ENCODE measurements at regions of chr11 and their contacts with region 1.

Region 1: DNA sequence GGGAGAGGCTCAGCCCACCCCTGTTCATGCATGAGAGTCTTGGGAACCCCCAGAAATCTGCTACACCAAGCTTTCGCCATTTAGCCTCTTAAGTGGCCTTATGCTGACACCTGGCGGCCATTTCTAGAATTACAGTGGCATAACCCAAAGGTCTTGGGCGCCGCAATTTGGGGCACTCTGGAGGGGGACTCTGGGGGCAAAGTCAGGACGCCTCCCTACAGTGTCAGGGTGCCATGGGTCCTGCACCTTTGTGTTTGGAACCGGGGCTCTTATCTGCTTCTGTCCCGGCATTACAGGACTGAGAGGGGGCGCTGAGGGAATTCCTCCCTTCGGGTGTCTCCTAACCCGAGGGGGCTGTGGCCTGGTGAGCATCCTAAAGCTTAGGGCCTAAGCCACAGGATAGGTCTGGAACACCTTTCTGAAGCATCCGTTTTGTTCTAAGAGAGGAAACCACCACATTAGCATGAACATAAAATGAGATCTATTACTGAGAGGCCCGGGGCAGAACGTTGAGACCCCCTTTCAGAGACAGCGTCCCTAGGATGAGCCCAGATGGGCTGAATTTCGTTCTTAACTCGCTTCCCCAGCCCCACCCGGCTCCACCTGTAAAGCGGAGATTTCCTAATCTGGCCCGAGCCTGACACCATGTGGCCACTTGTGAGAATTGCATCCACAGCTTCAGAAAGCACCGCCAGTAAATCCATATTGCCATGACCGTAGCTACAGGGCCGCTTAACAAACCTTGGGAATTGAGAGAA is 9.3 kb downstream of the INS start:
- DNase-seq: peak; percentile 74 to 89 (median 83)
- H3K4me3 ChIP-seq: no peak overlapping the region
- H3K27ac ChIP-seq: no peak overlapping the region
- H3K4me1 ChIP-seq: peaks cover 0 to 7% (median 2%) of the 10 kb centered on the region in 4 experiments
- H3K27me3 ChIP-seq: peaks cover 0 to 48% (median 23%) of the 10 kb centered on the region in 5 experiments

Region 2: DNA sequence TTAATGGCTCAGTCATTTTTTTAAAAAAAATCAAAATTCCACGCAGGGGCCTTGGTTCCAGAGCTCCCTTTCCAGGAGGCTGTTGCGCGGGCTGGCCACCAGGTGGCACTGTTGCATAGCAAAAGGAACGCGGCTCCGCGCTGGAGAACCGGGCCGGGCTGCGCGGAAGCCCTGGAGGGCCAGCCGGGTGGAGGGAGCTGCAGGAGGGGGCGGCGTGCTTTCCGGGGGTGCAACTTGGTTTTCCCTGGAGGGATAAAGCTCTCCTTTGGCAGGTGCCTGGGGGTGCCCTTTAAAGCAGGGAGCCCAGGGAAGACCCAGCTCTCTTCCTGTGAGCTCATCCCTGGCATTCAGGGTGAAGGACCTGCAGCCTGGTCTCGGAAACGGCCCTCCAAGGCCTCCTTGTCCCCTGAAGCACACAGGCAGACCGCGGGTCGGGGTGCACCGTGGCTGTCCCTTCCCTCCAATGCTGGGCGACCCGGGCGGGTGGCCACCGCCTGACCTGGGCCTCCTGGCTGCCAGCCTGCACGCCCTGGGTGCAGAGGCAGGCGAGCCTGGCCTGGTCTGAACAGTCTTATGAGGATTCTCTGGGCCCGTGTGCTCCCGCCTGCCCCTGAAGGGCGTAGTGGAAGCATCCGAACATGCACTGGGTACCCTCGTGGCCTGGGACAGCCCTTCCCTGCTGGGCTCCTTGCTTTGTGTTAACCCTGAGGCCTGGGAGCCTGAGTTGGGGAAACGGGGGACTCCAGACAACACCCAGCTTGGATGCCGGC is 498.7 kb before region 1 on chr11:
- CTCF ChIA-PET with region 1: interaction called, 11 read pairs
- POLR2A ChIA-PET with region 1: no interaction called
- DNase-seq: peak; percentile 56 to 77 (median 73)
- H3K4me3 ChIP-seq: peak overlapping the region in 1 of 7 experiments; percentile 48
- H3K27ac ChIP-seq: no peak overlapping the region
- H3K4me1 ChIP-seq: peaks cover 2 to 49% (median 41%) of the 10 kb centered on the region in 4 experiments
- H3K27me3 ChIP-seq: peaks cover 0 to 3% (median 0%) of the 10 kb centered on the region in 5 experiments

Region 3: DNA sequence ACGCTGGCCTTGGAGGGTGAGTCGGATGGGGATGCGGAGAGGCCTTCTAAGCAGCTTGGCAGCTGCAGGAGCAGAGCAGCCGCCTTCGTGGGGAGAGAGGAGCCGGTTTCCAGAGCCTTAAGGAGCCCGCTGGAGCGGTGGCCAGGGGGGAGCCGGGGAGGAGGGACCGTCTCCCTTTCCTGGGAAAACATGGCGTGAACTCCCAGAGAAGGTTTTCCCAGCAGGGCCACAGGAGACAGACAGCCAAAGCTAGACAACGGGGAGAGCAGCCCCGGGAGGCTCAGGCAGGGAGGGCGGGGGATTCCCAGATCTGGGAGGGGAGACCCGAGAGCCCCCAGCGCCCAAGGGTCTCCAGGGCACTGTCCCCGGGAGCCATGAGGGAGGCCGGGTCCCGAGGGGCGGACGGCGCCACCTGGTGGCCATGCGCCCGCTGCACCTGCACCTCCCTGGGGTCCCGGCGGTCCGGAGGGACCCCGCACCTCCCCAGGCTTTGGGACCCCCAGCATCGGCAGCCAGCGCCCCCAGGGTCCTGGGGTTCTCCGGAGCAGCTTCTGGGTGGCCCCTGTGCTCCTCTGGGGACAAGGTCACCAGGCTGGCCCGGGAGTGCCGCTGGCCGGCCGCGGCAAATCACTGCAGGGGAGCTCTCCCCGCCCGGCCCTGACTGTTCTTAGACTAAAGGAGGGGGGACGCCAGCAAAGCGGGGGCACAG is 319.3 kb before region 1 on chr11:
- CTCF ChIA-PET with region 1: interaction called, 52 read pairs
- POLR2A ChIA-PET with region 1: no interaction called
- DNase-seq: peak in 2 of 3 donors; percentile 48 to 53
- H3K4me3 ChIP-seq: no peak overlapping the region
- H3K27ac ChIP-seq: no peak overlapping the region
- H3K4me1 ChIP-seq: peaks cover 0 to 16% (median 7%) of the 10 kb centered on the region in 4 experiments
- H3K27me3 ChIP-seq: peaks cover 0 to 13% (median 2%) of the 10 kb centered on the region in 5 experiments

Region 4: DNA sequence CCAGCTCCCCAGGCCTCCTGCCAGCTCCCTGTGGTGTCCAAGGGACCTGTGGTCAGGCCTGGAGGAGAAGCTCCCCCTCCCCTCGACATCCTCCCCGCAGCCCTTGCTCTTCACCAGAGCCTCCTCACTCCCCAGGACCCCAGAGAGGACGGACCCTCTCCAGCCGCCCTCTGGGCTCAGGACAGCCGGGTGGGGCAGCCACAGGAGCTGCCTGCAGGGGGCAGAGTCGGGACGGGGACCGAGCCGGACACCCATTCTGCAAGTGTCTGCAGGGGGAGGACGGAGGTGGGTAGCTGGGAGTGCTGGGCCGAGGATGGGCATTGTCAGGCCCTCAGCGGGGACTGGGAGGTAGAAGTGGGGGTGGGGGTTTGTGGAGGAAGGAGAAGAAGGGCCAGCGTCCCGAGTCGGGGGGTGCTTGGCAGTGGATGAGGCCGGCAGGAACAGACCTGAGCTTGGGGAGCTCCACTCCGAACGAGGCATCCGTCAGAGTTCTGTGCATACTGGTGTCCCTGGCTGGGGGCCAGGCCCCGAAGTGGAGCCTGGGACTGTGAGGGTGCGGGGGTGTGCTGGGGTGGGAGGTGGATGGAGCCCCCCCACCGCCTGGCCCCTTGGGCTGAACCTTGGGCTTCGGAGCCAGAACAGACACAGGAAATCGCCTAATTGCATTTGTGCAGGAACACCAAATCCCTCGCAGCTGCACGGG is 275.2 kb before region 1 on chr11:
- CTCF ChIA-PET with region 1: interaction called, 27 read pairs
- POLR2A ChIA-PET with region 1: no interaction called
- DNase-seq: peak in 2 of 3 donors; percentile 41 to 42
- H3K4me3 ChIP-seq: peak overlapping the region in 1 of 7 experiments; percentile 42
- H3K27ac ChIP-seq: no peak overlapping the region
- H3K4me1 ChIP-seq: peaks cover 0 to 55% (median 44%) of the 10 kb centered on the region in 4 experiments
- H3K27me3 ChIP-seq: no peaks in the 10 kb centered on the region

Region 5: DNA sequence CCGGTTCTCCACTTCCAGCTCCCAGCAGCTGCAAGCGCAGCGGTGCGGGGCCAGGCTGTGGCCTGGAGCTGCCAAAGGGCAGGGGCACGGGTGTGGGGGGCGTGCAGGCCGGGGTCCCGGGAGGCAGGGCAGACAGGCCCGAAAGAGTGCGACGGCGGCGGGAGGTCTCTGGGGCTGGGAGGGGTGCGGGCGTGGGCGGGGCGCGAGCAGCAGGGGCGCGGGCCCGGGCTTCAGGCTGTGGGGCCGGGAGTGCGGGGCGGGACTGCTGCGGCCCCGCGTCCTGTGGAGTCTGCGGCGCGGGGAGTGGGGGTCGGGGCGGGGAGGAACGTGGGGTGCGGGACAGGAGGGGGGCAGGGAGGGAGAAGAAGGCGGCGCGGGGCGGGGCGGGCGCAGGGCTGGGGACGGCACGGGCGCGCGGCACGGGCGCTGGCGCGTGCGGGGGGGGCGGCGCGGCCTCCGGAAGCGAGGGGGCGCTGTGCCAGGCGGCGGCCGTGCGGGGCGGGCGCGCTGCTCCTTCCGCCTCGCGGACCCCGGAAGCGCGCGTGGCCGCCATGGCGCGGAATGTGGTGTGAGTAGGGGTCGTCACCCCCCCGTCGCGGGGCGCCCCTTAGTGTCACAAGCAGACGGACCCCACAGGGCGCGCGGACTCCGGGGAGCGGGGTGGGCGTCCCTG is 204.7 kb before region 1 on chr11 and contains the start of gene MRPL23:
- CTCF ChIA-PET with region 1: interaction called, 38 read pairs
- POLR2A ChIA-PET with region 1: no interaction called
- DNase-seq: no peak
- H3K4me3 ChIP-seq: no peak within 1 kb of the TSS
- H3K27ac ChIP-seq: no peak within 1 kb of the TSS
- H3K4me1 ChIP-seq: peaks cover 0 to 13% (median 9%) of the 10 kb centered on the region in 4 experiments
- H3K27me3 ChIP-seq: no peaks in the 10 kb centered on the region

Region 6: DNA sequence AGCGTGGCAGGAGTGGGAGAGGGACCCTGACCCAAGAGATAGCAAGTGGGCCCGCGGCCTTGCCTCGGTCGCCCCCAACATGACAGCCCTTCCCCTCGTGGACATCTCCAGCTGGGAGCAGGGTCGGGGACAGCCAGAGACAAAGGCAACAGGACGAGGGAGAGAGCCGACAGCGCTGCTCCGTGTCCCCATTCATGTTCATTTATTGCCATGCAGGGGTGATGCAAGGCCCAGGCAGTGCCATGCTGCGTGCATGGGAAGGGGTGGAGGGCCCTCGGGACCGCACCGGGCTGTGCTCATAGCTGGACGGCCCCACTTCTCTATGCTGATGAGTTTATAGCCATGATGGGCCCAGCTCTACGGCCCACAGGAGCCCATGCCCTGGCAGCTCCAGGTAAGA is 191.9 kb before region 1 on chr11:
- CTCF ChIA-PET with region 1: interaction called, 44 read pairs
- POLR2A ChIA-PET with region 1: no interaction called
- DNase-seq: no peak
- H3K4me3 ChIP-seq: no peak overlapping the region
- H3K27ac ChIP-seq: no peak overlapping the region
- H3K4me1 ChIP-seq: no peaks in the 10 kb centered on the region
- H3K27me3 ChIP-seq: no peaks in the 10 kb centered on the region

Region 7: DNA sequence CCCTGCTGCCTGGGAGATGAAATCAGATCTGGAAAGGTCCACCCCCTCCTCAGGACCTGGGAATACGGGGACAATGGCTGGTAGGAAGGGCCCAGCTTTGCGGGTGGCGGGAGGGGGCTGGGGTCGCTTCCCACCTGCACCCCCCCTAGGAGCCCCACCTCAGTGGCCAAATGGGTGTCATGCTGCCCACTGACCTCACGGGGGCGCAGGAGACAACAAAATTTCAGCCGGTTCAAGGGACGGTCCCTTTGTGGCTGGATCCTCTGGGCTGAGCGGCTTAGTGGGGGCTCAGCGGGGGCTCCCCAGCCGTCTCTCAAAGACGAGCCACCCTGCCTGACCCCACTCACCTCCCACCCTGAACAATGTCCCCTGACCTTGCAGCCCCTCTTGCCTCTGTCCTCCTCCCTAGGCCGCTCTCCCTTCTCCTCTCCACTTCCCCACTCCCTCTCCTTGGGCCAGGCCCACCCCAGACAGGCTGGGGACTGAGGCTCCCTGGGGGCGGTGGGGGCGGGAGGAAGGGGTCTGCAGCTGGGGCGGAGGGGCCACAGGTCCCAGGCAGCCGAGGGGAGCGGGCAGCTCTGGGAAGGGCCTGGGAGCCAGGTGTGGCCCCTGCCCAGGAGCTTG is 114.7 kb before region 1 on chr11:
- CTCF ChIA-PET with region 1: interaction called, 341 read pairs
- POLR2A ChIA-PET with region 1: interaction called, 4 read pairs
- DNase-seq: no peak
- H3K4me3 ChIP-seq: no peak overlapping the region
- H3K27ac ChIP-seq: no peak overlapping the region
- H3K4me1 ChIP-seq: no peaks in the 10 kb centered on the region
- H3K27me3 ChIP-seq: peaks cover 0 to 2% (median 0%) of the 10 kb centered on the region in 5 experiments

Region 8: DNA sequence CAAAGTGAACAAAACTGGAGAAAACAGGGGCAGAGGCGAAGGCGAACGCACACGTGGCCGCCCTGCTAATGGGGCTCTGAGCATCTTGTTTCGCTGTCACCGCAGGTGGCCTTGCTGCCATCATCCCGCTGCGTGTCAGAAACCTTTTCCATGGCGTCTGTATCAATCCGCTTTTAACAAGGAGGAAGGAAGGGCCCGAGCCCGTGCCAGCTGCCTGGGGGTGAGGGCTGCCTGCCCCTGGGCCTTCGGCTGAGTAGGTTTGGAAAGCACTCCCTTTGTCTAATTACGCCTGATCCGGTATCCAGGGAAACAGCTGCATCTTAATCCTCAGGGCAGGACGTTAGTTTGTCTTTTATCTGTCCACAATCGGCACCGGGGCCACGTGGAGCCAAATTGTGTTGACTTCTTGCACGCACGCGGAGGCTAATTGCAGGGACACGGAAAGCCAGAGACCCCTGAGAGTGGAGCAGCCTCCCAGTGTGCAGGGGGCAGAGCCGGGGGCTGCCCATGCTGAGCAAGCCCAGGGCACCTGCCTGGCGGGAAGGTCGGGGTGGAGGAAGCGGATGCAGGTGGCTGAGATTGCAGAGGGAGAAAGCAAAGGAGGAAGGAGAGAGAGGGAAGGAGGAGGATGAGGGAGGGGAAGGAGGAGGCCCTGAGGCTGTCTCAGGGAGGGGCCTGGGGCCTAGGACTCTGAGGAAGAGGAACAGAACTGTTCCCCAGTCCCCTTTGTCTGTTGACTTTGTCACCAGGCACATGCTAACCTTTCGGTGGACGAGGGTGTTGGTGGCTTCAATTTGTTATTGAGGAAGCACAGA is 39.2 kb after region 1 on chr11:
- CTCF ChIA-PET with region 1: no interaction called
- POLR2A ChIA-PET with region 1: no interaction called
- DNase-seq: peak; percentile 54 to 88 (median 85)
- H3K4me3 ChIP-seq: peak overlapping the region in 1 of 7 experiments; percentile 30
- H3K27ac ChIP-seq: no peak overlapping the region
- H3K4me1 ChIP-seq: peaks cover 5 to 45% (median 25%) of the 10 kb centered on the region in 4 experiments
- H3K27me3 ChIP-seq: no peaks in the 10 kb centered on the region

Measured in common myeloid progenitor, CD34-positive (primary cell).